CD4-positive, alpha-beta memory T cell (primary cell): ENCODE measurements at regions of chr5 and their contacts with region 1.

Region 1: GRCh38 chr5:40679155-40679913 is 381 bp upstream of the PTGER4 start:
- DNase-seq: peak; percentile 90 to 92 (median 90)
- H3K4me3 ChIP-seq: peak overlapping the region; percentile 74 to 92
- H3K4me3 Mint-ChIP-seq: peak overlapping the region; percentile 92 to 100 (median 99)
- H3K27ac ChIP-seq: peak overlapping the region; percentile 86
- H3K27ac Mint-ChIP-seq: peak overlapping the region; percentile 87 to 99 (median 98)
- H3K4me1 ChIP-seq: peaks cover 46% of the 10 kb centered on the region
- H3K4me1 Mint-ChIP-seq: peaks cover 34 to 70% (median 46%) of the 10 kb centered on the region in 4 donors
- H3K27me3 ChIP-seq: no peaks in the 10 kb centered on the region
- H3K27me3 Mint-ChIP-seq: no peaks in the 10 kb centered on the region

Region 2: DNA sequence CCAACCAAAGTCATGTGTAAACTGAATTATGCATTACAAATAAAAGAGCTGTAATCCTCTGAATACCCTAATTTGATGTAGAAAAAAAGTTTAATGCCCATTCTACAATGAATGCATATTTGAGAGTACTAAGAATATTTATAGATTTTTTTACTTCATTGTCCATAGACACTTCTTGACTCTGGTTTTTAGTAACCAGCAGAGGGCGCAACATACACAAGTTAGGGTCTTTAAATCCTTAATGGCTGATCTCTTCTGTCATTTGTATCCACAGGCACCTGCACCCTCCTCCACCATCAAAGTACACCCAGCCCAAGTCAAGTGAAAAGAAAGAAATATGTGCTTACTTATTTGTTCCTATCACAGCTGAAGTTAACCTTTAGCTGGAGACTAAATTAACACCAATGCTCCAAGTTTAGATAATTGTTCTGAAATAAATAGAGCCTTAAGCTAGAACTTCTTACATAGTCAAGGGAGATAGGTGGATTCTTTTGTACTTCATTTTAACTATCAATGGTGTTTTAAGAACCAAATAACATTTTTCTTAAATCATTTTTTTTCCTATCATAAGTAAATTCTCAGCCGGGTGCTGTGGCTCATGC is 730.4 kb before region 1 on chr5:
- CTCF ChIA-PET with region 1: interaction called, 15 read pairs
- POLR2A ChIA-PET with region 1: interaction called, 4 read pairs
- intact Hi-C with region 1: no loop called
- DNase-seq: peak; percentile 64 to 69 (median 66)
- H3K4me3 ChIP-seq: no peak overlapping the region
- H3K4me3 Mint-ChIP-seq: no peak overlapping the region
- H3K27ac ChIP-seq: no peak overlapping the region
- H3K27ac Mint-ChIP-seq: no peak overlapping the region
- H3K4me1 ChIP-seq: no peaks in the 10 kb centered on the region
- H3K4me1 Mint-ChIP-seq: peaks cover 0 to 5% (median 2%) of the 10 kb centered on the region in 4 donors
- H3K27me3 ChIP-seq: no peaks in the 10 kb centered on the region
- H3K27me3 Mint-ChIP-seq: no peaks in the 10 kb centered on the region

Region 3: DNA sequence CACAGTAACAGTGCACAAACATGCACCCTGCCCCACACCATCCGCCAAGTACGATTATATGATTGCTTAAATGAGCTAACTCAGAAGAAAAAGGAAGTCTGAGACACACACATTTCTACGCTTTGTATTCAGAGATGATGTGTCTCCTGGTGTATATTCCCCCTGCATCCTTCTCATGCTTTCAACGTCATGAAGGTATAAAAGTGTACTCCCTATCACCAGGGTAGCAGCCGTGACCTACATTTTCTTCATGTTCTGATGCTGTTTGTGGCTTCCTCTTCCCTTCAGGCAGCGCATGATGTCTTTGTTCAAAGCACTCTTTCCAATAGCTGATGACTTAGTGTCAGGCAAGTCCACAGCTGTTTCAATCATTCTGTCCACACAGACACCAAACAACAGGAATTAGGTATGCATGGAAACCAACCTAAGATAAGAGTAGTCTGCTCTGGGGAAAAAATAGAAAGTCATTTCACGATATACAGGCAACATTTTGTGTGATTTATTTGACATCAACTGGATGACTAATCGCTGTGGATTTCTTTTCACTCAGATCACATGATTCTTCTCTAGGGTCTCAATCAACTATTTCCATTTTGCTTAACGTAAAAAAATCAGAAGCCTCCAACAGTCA is 269.0 kb before region 1 on chr5:
- CTCF ChIA-PET with region 1: interaction called, 7 read pairs
- POLR2A ChIA-PET with region 1: interaction called, 194 read pairs
- intact Hi-C with region 1: loop called (anchors 1 kb)
- DNase-seq: peak; percentile 88 to 97 (median 97)
- H3K4me3 ChIP-seq: peak overlapping the region in 1 of 2 donors; percentile 50
- H3K4me3 Mint-ChIP-seq: peak overlapping the region; percentile 65 to 89 (median 80)
- H3K27ac ChIP-seq: peak overlapping the region; percentile 95
- H3K27ac Mint-ChIP-seq: peak overlapping the region; percentile 86 to 100 (median 99)
- H3K4me1 ChIP-seq: peaks cover 65% of the 10 kb centered on the region
- H3K4me1 Mint-ChIP-seq: peaks cover 38 to 72% (median 52%) of the 10 kb centered on the region in 4 donors
- H3K27me3 ChIP-seq: no peaks in the 10 kb centered on the region
- H3K27me3 Mint-ChIP-seq: no peaks in the 10 kb centered on the region

Region 4: DNA sequence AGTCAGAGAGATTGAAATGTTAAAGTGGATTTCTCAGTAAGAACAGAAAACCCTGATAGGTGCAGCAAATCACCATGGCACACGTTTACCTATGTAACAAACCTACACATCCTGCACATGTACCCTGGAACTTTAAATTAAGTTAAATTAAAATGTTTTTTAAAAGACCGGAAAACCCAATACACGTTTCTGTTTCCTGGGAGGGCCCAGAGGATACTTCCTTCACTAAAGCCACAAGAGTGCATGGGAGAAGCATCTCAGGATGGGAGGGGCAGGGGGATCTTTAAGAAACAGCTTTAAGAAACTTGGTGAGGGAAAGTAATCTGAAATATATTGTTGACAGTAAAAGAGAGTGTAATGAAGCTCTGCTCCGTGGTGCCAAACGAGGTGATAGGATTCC is 164.4 kb before region 1 on chr5:
- CTCF ChIA-PET with region 1: interaction called, 3 read pairs
- POLR2A ChIA-PET with region 1: interaction called, 10 read pairs
- intact Hi-C with region 1: no loop called
- DNase-seq: peak; percentile 37 to 61 (median 50)
- H3K4me3 ChIP-seq: no peak overlapping the region
- H3K4me3 Mint-ChIP-seq: peak overlapping the region in 7 of 8 donors; percentile 42 to 80 (median 72)
- H3K27ac ChIP-seq: no peak overlapping the region
- H3K27ac Mint-ChIP-seq: peak overlapping the region; percentile 68 to 92 (median 85)
- H3K4me1 ChIP-seq: peaks cover 29% of the 10 kb centered on the region
- H3K4me1 Mint-ChIP-seq: peaks cover 20 to 44% (median 34%) of the 10 kb centered on the region in 4 donors
- H3K27me3 ChIP-seq: no peaks in the 10 kb centered on the region
- H3K27me3 Mint-ChIP-seq: no peaks in the 10 kb centered on the region

Region 5: DNA sequence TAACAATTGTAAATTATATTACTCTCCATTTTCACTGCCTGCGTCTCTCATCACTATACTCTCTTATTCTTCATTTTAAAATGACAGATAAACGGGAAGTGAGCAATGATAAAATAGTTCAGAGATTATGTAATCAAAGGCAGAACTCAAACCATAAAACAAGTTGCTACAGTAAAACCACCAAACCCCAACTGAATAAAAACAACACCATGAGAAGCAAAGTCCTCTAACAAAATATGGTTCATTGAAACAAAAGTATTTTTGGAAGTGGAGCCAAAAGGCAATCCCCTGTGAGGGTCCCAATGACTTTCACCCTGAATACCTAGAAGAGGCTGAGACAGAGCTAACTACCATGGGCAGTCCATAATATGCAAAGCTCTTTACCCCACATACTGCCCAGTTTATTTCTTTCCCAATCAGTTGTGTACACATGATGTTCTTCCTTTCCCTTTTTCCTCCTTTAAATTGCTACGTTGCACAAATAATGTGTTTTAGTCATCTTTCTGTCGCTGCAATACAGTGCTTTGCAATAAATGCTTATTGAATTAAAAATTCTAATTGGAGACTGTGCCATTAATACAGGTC is 63.7 kb before region 1 on chr5:
- CTCF ChIA-PET with region 1: no interaction called
- POLR2A ChIA-PET with region 1: interaction called, 11 read pairs
- intact Hi-C with region 1: no loop called
- DNase-seq: peak in 3 of 5 donors; percentile 14 to 28 (median 22)
- H3K4me3 ChIP-seq: no peak overlapping the region
- H3K4me3 Mint-ChIP-seq: peak overlapping the region in 7 of 8 donors; percentile 1 to 83 (median 68)
- H3K27ac ChIP-seq: no peak overlapping the region
- H3K27ac Mint-ChIP-seq: peak overlapping the region; percentile 48 to 95 (median 77)
- H3K4me1 ChIP-seq: peaks cover 13% of the 10 kb centered on the region
- H3K4me1 Mint-ChIP-seq: peaks cover 18 to 32% (median 22%) of the 10 kb centered on the region in 4 donors
- H3K27me3 ChIP-seq: no peaks in the 10 kb centered on the region
- H3K27me3 Mint-ChIP-seq: no peaks in the 10 kb centered on the region

Region 6: GRCh38 chr5:40665635-40666301 is 13.6 kb before region 1 on chr5:
- CTCF ChIA-PET with region 1: interaction called, 8 read pairs
- POLR2A ChIA-PET with region 1: interaction called, 11 read pairs
- intact Hi-C with region 1: no loop called
- DNase-seq: no peak
- H3K4me3 ChIP-seq: no peak overlapping the region
- H3K4me3 Mint-ChIP-seq: no peak overlapping the region
- H3K27ac ChIP-seq: no peak overlapping the region
- H3K27ac Mint-ChIP-seq: no peak overlapping the region
- H3K4me1 ChIP-seq: peaks cover 24% of the 10 kb centered on the region
- H3K4me1 Mint-ChIP-seq: peaks cover 15 to 22% (median 20%) of the 10 kb centered on the region in 4 donors
- H3K27me3 ChIP-seq: no peaks in the 10 kb centered on the region
- H3K27me3 Mint-ChIP-seq: no peaks in the 10 kb centered on the region

Region 7: DNA sequence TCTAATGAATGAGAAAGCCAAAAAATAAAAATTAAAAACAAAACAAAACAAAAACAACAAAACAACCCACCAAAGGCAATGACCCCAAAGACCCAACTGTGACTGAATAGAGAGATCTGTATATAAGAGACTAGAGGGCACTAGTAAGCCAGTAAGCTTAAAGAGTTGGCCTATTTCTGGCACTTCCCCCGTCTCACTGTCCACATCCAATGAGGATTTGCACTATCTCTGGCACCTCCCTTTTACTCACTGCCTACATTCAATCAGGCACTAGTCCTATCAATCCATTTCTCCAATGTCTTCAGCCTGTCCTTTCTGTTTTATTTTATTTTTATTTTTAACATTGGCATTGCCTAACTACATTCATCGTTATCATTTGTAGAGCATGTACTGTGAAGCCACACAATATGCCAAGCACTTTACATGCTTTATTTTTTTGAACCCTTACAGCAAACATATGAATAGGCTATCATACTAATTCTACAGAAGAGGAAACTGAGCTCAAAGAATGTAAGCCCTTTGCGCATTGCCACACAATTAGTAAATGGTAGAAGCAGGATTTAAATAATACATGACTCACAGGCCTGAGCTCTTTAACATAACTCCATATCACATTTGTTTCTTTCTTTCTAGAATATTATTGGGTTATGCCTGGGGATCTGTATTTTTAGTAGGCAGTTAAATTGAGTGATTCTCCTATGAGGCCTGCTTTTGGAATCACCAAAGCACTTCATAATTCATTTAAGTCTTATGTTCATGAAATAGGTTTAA is 464.0 kb after region 1 on chr5:
- CTCF ChIA-PET with region 1: no interaction called
- POLR2A ChIA-PET with region 1: no interaction called
- intact Hi-C with region 1: no loop called
- DNase-seq: no peak
- H3K4me3 ChIP-seq: no peak overlapping the region
- H3K4me3 Mint-ChIP-seq: no peak overlapping the region
- H3K27ac ChIP-seq: no peak overlapping the region
- H3K27ac Mint-ChIP-seq: no peak overlapping the region
- H3K4me1 ChIP-seq: no peaks in the 10 kb centered on the region
- H3K4me1 Mint-ChIP-seq: peaks cover 0 to 4% (median 0%) of the 10 kb centered on the region in 4 donors
- H3K27me3 ChIP-seq: no peaks in the 10 kb centered on the region
- H3K27me3 Mint-ChIP-seq: no peaks in the 10 kb centered on the region

Region 8: GRCh38 chr5:41256400-41256799 is 577.1 kb after region 1 on chr5:
- CTCF ChIA-PET with region 1: no interaction called
- POLR2A ChIA-PET with region 1: no interaction called
- intact Hi-C with region 1: no loop called
- DNase-seq: no peak
- H3K4me3 ChIP-seq: no peak overlapping the region
- H3K4me3 Mint-ChIP-seq: no peak overlapping the region
- H3K27ac ChIP-seq: no peak overlapping the region
- H3K27ac Mint-ChIP-seq: no peak overlapping the region
- H3K4me1 ChIP-seq: no peaks in the 10 kb centered on the region
- H3K4me1 Mint-ChIP-seq: no peaks in the 10 kb centered on the region
- H3K27me3 ChIP-seq: no peaks in the 10 kb centered on the region
- H3K27me3 Mint-ChIP-seq: peaks cover 0 to 2% of the 10 kb centered on the region in 2 donors